ENCODE measurements at regions of chr19 and their contacts with region 1.

Region 1: DNA sequence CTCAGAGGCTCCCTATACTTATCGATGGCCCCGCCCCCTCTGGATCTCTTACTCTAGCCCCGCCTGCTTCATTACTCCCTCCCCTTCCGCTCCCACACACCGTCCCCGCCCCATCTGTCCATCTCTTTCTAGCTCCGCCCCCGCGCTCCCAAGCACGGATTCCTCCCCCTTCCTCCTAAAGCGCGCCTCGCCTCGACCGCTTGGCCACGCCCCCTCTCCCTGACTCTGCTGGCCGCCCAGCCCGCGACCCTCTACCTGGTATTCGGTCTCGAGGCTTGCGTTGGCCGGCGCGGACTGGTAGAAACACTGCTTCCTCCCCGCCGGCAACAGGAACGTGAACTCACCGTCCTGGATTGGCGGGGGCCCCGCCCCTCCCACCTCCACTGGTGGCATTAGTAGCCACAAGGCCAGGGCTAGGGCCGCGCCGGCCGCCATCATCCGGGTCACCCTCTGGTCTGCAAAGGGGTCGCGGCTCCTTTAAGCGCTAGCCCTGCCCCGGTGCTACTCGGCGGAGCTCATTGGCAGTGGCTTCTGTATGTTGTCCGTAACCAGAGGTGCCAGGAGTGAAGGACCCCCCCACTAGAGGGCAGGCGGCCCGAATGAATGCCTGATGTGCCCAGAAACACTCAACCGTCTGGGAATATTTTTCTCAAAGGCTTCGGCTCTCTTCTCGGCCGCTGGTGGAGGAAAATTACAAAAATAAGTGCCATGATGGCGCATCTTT is at the start of gene TMED1:
- DNase-seq: peak; percentile 85 to 98 (median 90)
- ATAC-seq: peak; percentile 86
- H3K4me3 ChIP-seq: peak within 1 kb of the TSS; percentile 71
- H3K4me3 Mint-ChIP-seq: peak within 1 kb of the TSS; percentile 98
- H3K27ac ChIP-seq: peak within 1 kb of the TSS; percentile 96
- H3K27ac Mint-ChIP-seq: peak within 1 kb of the TSS; percentile 100
- H3K4me1 ChIP-seq: peaks cover 21% of the 10 kb centered on the region
- H3K4me1 Mint-ChIP-seq: peaks cover 15% of the 10 kb centered on the region
- H3K27me3 ChIP-seq: no peaks in the 10 kb centered on the region
- H3K27me3 Mint-ChIP-seq: no peaks in the 10 kb centered on the region
- CTCF ChIP-seq: no peak
- total RNA-seq, gene TMED1: 6.7 to 7.0 TPM

Region 2: GRCh38 chr19:10653715-10654492 is 182.0 kb before region 1 on chr19 and contains the start of gene ILF3:
- CTCF ChIA-PET with region 1: no interaction called
- POLR2A ChIA-PET with region 1: interaction called, 9 read pairs
- intact Hi-C with region 1: loop called in 1 of 2 experiments (anchors 2 kb)
- DNase-seq: peak; percentile 99 to 100 (median 100)
- ATAC-seq: peak; percentile 74
- H3K4me3 ChIP-seq: peak within 1 kb of the TSS; percentile 92
- H3K4me3 Mint-ChIP-seq: peak within 1 kb of the TSS; percentile 94
- H3K27ac ChIP-seq: peak within 1 kb of the TSS; percentile 99 to 100
- H3K27ac Mint-ChIP-seq: peak within 1 kb of the TSS; percentile 92
- H3K4me1 ChIP-seq: peaks cover 58% of the 10 kb centered on the region
- H3K4me1 Mint-ChIP-seq: peaks cover 52% of the 10 kb centered on the region
- H3K27me3 ChIP-seq: no peaks in the 10 kb centered on the region
- H3K27me3 Mint-ChIP-seq: peaks cover 4% of the 10 kb centered on the region
- CTCF ChIP-seq: no peak
- total RNA-seq, gene ILF3: 464 to 491 TPM

Region 3: GRCh38 chr19:10701955-10702525 is 133.9 kb before region 1 on chr19:
- CTCF ChIA-PET with region 1: no interaction called
- POLR2A ChIA-PET with region 1: interaction called, 17 read pairs
- intact Hi-C with region 1: no loop called
- DNase-seq: peak in 2 of 14 experiments; percentile 27 to 44
- ATAC-seq: peak; percentile 13
- H3K4me3 ChIP-seq: peak overlapping the region; percentile 99
- H3K4me3 Mint-ChIP-seq: peak overlapping the region; percentile 90
- H3K27ac ChIP-seq: no peak overlapping the region
- H3K27ac Mint-ChIP-seq: peak overlapping the region; percentile 27
- H3K4me1 ChIP-seq: peaks cover 19% of the 10 kb centered on the region
- H3K4me1 Mint-ChIP-seq: peaks cover 13% of the 10 kb centered on the region
- H3K27me3 ChIP-seq: peaks cover 0 to 4% of the 10 kb centered on the region in 2 experiments
- H3K27me3 Mint-ChIP-seq: peaks cover 7% of the 10 kb centered on the region
- CTCF ChIP-seq: no peak

Region 4: DNA sequence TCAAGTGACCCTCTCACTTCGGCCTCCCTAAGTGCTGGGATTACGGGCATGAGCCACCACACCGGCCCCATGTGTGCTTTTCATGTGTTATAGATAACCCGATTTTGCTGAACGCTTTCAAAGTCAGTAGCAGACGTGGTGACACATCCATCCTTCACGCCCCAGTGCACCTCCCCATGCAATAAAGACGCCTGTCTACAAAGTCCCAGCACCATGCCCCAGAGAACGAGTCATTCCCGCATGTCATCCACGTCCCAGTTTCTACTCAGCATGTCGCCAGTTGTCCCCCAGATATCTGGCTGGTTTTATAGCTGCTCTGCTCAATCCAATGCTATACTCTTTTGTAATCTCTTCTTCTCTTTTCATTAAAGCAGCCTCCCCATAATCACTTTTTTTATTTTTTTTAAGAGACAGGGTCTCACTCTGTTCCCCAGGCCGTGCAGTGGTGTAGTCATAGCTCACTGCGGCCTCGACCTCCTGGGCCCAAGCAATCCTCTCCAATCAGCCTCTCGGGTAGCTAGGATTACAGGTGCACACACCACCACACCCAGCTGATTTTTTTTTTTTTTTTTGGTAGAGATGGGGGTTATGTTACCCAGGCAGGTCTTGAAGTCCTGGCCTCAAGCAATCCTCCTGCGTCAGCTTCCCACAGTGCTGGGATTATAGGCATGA is 75.5 kb before region 1 on chr19:
- CTCF ChIA-PET with region 1: no interaction called
- POLR2A ChIA-PET with region 1: interaction called, 16 read pairs
- intact Hi-C with region 1: loop called in 1 of 2 experiments (anchors 2 kb)
- DNase-seq: peak in 7 of 14 experiments; percentile 21 to 67 (median 53)
- ATAC-seq: peak; percentile 27
- H3K4me3 ChIP-seq: peak overlapping the region; percentile 34
- H3K4me3 Mint-ChIP-seq: peak overlapping the region; percentile 67
- H3K27ac ChIP-seq: peak overlapping the region; percentile 60 to 91
- H3K27ac Mint-ChIP-seq: peak overlapping the region; percentile 93
- H3K4me1 ChIP-seq: peaks cover 94% of the 10 kb centered on the region
- H3K4me1 Mint-ChIP-seq: peaks cover 87% of the 10 kb centered on the region
- H3K27me3 ChIP-seq: no peaks in the 10 kb centered on the region
- H3K27me3 Mint-ChIP-seq: no peaks in the 10 kb centered on the region
- CTCF ChIP-seq: no peak

Region 5: DNA sequence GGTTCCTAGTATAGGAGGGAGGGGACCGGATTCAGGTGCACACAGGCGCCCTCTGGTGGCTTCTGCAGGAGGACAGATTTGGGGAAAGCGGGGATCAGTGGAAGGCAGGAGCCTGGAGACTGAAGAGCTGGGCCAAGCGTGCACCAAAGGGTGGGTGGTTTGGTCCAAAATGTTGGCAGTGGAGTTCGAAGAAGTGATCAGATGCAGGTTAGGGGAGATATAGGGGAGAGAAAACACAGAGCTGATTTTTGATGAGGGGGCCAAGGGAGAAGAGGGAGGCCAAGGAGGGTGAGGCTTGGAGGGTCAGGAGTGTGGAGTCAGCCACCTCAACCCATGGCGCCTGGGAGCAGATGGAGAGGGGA is 28.6 kb after region 1 on chr19:
- CTCF ChIA-PET with region 1: interaction called, 29 read pairs
- POLR2A ChIA-PET with region 1: interaction called, 23 read pairs
- intact Hi-C with region 1: loop called in 1 of 2 experiments (anchors 2 kb)
- DNase-seq: peak; percentile 70 to 91 (median 77)
- ATAC-seq: peak; percentile 97
- H3K4me3 ChIP-seq: no peak overlapping the region
- H3K4me3 Mint-ChIP-seq: no peak overlapping the region
- H3K27ac ChIP-seq: no peak overlapping the region
- H3K27ac Mint-ChIP-seq: peak overlapping the region; percentile 0
- H3K4me1 ChIP-seq: peaks cover 11% of the 10 kb centered on the region
- H3K4me1 Mint-ChIP-seq: peaks cover 7% of the 10 kb centered on the region
- H3K27me3 ChIP-seq: no peaks in the 10 kb centered on the region
- H3K27me3 Mint-ChIP-seq: no peaks in the 10 kb centered on the region
- CTCF ChIP-seq: peak; percentile 96

Region 6: GRCh38 chr19:10870955-10871603 is 35.2 kb after region 1 on chr19 and contains the start of gene CARM1:
- CTCF ChIA-PET with region 1: interaction called, 4 read pairs
- POLR2A ChIA-PET with region 1: interaction called, 12 read pairs
- intact Hi-C with region 1: no loop called
- DNase-seq: peak; percentile 98 to 100 (median 99)
- ATAC-seq: peak; percentile 83
- H3K4me3 ChIP-seq: peak within 1 kb of the TSS; percentile 69
- H3K4me3 Mint-ChIP-seq: peak within 1 kb of the TSS; percentile 86
- H3K27ac ChIP-seq: peak within 1 kb of the TSS in 1 of 2 donors; percentile 57
- H3K27ac Mint-ChIP-seq: peak within 1 kb of the TSS; percentile 54
- H3K4me1 ChIP-seq: peaks cover 26% of the 10 kb centered on the region
- H3K4me1 Mint-ChIP-seq: peaks cover 18% of the 10 kb centered on the region
- H3K27me3 ChIP-seq: no peaks in the 10 kb centered on the region
- H3K27me3 Mint-ChIP-seq: no peaks in the 10 kb centered on the region
- CTCF ChIP-seq: peak; percentile 34
- total RNA-seq, gene CARM1: 17.5 to 18.0 TPM